ENCODE measurements at regions of chr2 and their contacts with region 1.

Region 1: GRCh38 chr2:237291138-237291792 is 122.7 kb downstream of the COL6A3 start:
- DNase-seq: peak; percentile 94 to 96
- ATAC-seq: peak; percentile 90 to 93
- H3K4me3 ChIP-seq: peak overlapping the region in 2 of 4 donors; percentile 8 to 23
- H3K27ac ChIP-seq: peak overlapping the region; percentile 77 to 85 (median 80)
- H3K4me1 ChIP-seq: peaks cover 23 to 27% of the 10 kb centered on the region in 2 donors
- H3K27me3 ChIP-seq: no peaks in the 10 kb centered on the region
- CTCF ChIP-seq: no peak
- POLR2A ChIP-seq: peak in 1 of 2 donors; percentile 34

Region 2: GRCh38 chr2:236264256-236264655 is 1027.0 kb before region 1 on chr2 and contains the start of gene ASB18:
- in situ Hi-C with region 1: no loop called
- intact Hi-C with region 1: loop called (anchors 10 kb)
- DNase-seq: peak; percentile 78 to 93
- ATAC-seq: peak; percentile 72 to 87
- H3K4me3 ChIP-seq: peak within 1 kb of the TSS in 3 of 4 donors; percentile 5 to 22 (median 21)
- H3K27ac ChIP-seq: peak within 1 kb of the TSS; percentile 77 to 90 (median 82)
- H3K4me1 ChIP-seq: peaks cover 44 to 45% of the 10 kb centered on the region in 2 donors
- H3K27me3 ChIP-seq: no peaks in the 10 kb centered on the region
- CTCF ChIP-seq: no peak
- POLR2A ChIP-seq: no peak
- total RNA-seq, gene ASB18: 0.16 to 0.17 TPM in 2 of 4 donors, not detected in the others

Region 3: GRCh38 chr2:237403024-237403882 is 112.0 kb after region 1 on chr2:
- in situ Hi-C with region 1: no loop called
- intact Hi-C with region 1: loop called (anchors 2 kb)
- DNase-seq: peak; percentile 65 to 79
- ATAC-seq: peak; percentile 85
- H3K4me3 ChIP-seq: peak overlapping the region in 1 of 4 donors; percentile 1
- H3K27ac ChIP-seq: peak overlapping the region; percentile 71 to 87 (median 78)
- H3K4me1 ChIP-seq: peaks cover 5 to 19% of the 10 kb centered on the region in 2 donors
- H3K27me3 ChIP-seq: no peaks in the 10 kb centered on the region
- CTCF ChIP-seq: no peak
- POLR2A ChIP-seq: no peak